Transverse colon (tissue), 4 donors: ENCODE measurements at regions of chr17 and their contacts with region 1.

Region 1: GRCh38 chr17:40915199-40915661 is 22.2 kb downstream of the KRT23 start:
- DNase-seq: no peak
- H3K4me3 ChIP-seq: no peak overlapping the region
- H3K27ac ChIP-seq: no peak overlapping the region
- H3K4me1 ChIP-seq: peaks cover 0 to 7% (median under 1%) of the 10 kb centered on the region in 4 donors
- H3K27me3 ChIP-seq: no peaks in the 10 kb centered on the region
- CTCF ChIP-seq: no peak
- EP300 ChIP-seq: no peak
- POLR2A ChIP-seq: no peak

Region 2: GRCh38 chr17:41322094-41322902 is 407.1 kb after region 1 on chr17:
- in situ Hi-C with region 1: loop called in 3 of 4 experiments (anchors 10 kb)
- intact Hi-C with region 1: no loop called
- DNase-seq: no peak
- H3K4me3 ChIP-seq: no peak overlapping the region
- H3K27ac ChIP-seq: no peak overlapping the region
- H3K4me1 ChIP-seq: no peaks in the 10 kb centered on the region
- H3K27me3 ChIP-seq: no peaks in the 10 kb centered on the region
- CTCF ChIP-seq: peak; percentile 66 to 81 (median 76)
- EP300 ChIP-seq: no peak
- POLR2A ChIP-seq: no peak

Region 3: DNA sequence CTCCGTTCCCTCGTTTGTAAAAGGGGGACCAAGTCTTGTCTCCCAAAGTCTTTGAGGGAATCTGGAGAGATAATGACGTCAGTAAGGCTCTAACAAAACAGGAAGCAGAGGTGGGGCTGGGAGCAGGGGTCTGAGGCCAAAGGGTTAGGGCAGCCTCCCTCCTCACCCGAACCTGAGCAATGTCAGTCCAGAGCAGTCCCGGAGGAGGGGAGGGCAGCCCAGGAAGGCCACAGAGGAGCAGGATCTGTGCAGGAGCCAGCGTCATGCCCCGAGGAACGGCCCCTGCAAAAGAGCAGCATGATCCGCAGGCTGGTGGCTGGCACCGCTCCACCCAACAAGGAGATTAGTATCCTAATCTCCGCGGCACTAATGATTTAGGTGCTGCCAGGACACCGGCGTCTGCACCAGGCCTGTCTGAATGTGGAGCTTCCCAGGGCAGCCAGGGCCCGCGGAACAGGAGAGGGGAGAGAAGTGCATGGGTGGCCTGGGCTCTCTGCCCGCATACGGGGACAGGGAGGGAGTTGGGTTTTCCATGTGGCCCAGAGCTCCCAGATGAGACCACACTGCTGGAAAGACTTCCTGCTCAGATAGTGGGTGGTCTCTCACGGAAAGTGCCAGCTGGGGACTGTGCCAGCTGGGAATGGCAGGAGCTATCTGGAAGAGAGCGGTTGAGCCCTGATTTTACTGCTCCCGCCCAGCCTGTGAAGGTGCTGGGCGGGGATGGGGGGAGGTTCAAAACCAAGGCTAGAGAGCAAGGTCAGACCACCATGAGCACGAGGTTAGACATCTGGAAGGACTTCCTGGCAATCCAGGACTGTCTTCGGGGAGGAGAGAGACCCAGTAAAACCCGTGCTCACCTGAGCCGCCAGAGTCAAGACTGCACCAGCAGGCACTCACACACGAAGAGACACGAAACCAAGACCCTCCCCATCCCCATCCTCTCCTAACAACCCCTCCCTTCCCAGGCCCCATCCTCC is 720.2 kb after region 1 on chr17:
- in situ Hi-C with region 1: loop called in 1 of 4 experiments (anchors 25 kb)
- intact Hi-C with region 1: loop called (anchors 10 kb)
- DNase-seq: no peak
- H3K4me3 ChIP-seq: no peak overlapping the region
- H3K27ac ChIP-seq: no peak overlapping the region
- H3K4me1 ChIP-seq: peaks cover 0 to 8% (median 0%) of the 10 kb centered on the region in 4 donors
- H3K27me3 ChIP-seq: no peaks in the 10 kb centered on the region
- CTCF ChIP-seq: no peak
- EP300 ChIP-seq: no peak
- POLR2A ChIP-seq: no peak